Endothelial cell of umbilical vein (primary cell): ENCODE measurements at regions of chr1 and their contacts with region 1.

Region 1: GRCh38 chr1:156445789-156446263 is 54.7 kb downstream of the MEF2D start:
- DNase-seq: peak; percentile 77
- H3K4me3 ChIP-seq: no peak overlapping the region
- H3K27ac ChIP-seq: no peak overlapping the region
- H3K4me1 ChIP-seq: no peaks in the 10 kb centered on the region
- H3K27me3 ChIP-seq: peaks cover 39 to 46% of the 10 kb centered on the region in 2 experiments
- CTCF ChIP-seq: peak; percentile 89 to 95
- POLR2A ChIP-seq: no peak

Region 2: GRCh38 chr1:156200044-156200443 is 245.8 kb before region 1 on chr1:
- CTCF ChIA-PET with region 1: no interaction called
- POLR2A ChIA-PET with region 1: no interaction called
- dilution Hi-C with region 1: no loop called
- intact Hi-C with region 1: no loop called
- DNase-seq: no peak
- H3K4me3 ChIP-seq: no peak overlapping the region
- H3K27ac ChIP-seq: no peak overlapping the region
- H3K4me1 ChIP-seq: peaks cover 6% of the 10 kb centered on the region
- H3K27me3 ChIP-seq: no peaks in the 10 kb centered on the region
- CTCF ChIP-seq: no peak
- POLR2A ChIP-seq: no peak

Region 3: GRCh38 chr1:156347331-156347730 is 98.5 kb before region 1 on chr1:
- CTCF ChIA-PET with region 1: interaction called, 10 read pairs
- POLR2A ChIA-PET with region 1: no interaction called
- dilution Hi-C with region 1: no loop called
- intact Hi-C with region 1: no loop called
- DNase-seq: no peak
- H3K4me3 ChIP-seq: no peak overlapping the region
- H3K27ac ChIP-seq: no peak overlapping the region
- H3K4me1 ChIP-seq: no peaks in the 10 kb centered on the region
- H3K27me3 ChIP-seq: peaks cover 20 to 29% of the 10 kb centered on the region in 2 experiments
- CTCF ChIP-seq: no peak
- POLR2A ChIP-seq: no peak

Region 4: GRCh38 chr1:156371553-156372264 is 74.1 kb before region 1 on chr1:
- CTCF ChIA-PET with region 1: interaction called, 37 read pairs
- POLR2A ChIA-PET with region 1: no interaction called
- dilution Hi-C with region 1: no loop called
- intact Hi-C with region 1: no loop called
- DNase-seq: no peak
- H3K4me3 ChIP-seq: no peak overlapping the region
- H3K27ac ChIP-seq: no peak overlapping the region
- H3K4me1 ChIP-seq: peaks cover 6% of the 10 kb centered on the region
- H3K27me3 ChIP-seq: peaks cover 23 to 34% of the 10 kb centered on the region in 2 experiments
- CTCF ChIP-seq: no peak
- POLR2A ChIP-seq: no peak

Region 5: GRCh38 chr1:156429313-156430060 is 16.3 kb before region 1 on chr1:
- CTCF ChIA-PET with region 1: interaction called, 31 read pairs
- POLR2A ChIA-PET with region 1: no interaction called
- dilution Hi-C with region 1: no loop called
- intact Hi-C with region 1: no loop called
- DNase-seq: no peak
- H3K4me3 ChIP-seq: no peak overlapping the region
- H3K27ac ChIP-seq: no peak overlapping the region
- H3K4me1 ChIP-seq: no peaks in the 10 kb centered on the region
- H3K27me3 ChIP-seq: peaks cover 86 to 88% of the 10 kb centered on the region in 2 experiments
- CTCF ChIP-seq: no peak
- POLR2A ChIP-seq: no peak

Region 6: DNA sequence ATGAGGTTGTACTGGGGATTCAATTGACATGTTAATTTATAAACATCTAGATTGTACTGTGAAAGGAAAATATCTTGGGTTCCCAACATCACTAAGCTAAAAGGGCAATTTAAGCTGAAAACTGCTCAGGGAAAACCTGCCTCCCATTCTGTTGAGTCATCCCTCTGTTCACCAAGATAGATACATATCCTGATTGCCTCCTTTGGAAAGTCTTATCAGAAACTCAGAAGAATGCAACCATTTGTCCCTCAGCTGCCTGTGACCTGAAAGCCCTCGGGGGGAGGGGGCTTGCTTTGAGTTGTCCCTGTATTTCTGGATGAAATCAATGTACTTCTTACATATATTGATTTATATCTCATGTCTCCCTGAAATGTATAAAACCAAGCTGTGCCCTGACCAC is 879.4 kb after region 1 on chr1:
- CTCF ChIA-PET with region 1: no interaction called
- POLR2A ChIA-PET with region 1: no interaction called
- dilution Hi-C with region 1: no loop called
- intact Hi-C with region 1: no loop called
- DNase-seq: no peak
- H3K4me3 ChIP-seq: no peak overlapping the region
- H3K27ac ChIP-seq: no peak overlapping the region
- H3K4me1 ChIP-seq: no peaks in the 10 kb centered on the region
- H3K27me3 ChIP-seq: peaks cover 2 to 7% of the 10 kb centered on the region in 2 experiments
- CTCF ChIP-seq: no peak
- POLR2A ChIP-seq: no peak